ENCODE measurements at regions of chr17 and their contacts with region 1.

Region 1: DNA sequence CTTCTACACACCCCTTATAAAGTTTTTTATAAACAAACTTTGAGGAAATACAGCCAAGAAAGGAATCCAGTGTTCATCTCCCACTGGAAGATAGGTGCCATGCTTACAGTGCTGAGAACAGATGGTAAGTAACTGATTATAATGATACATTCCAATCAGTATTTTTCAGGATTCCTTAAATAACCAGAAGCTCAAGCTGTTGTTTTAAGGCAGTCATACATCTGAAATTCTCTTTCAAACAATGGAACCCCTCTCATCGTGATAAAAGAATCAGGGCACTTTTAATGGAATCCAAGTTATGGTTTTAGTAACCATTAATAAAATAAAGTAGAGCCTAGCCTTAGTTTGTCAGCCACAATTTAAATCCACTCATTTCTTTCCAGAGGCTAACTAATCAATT is 56.1 kb upstream of the STAC2 start:
- DNase-seq: no peak
- H3K4me3 ChIP-seq: no peak overlapping the region
- H3K4me3 Mint-ChIP-seq: no peak overlapping the region
- H3K27ac Mint-ChIP-seq: no peak overlapping the region
- H3K4me1 ChIP-seq: peaks cover 20% of the 10 kb centered on the region
- H3K4me1 Mint-ChIP-seq: peaks cover 12% of the 10 kb centered on the region
- H3K27me3 ChIP-seq: no peaks in the 10 kb centered on the region
- H3K27me3 Mint-ChIP-seq: no peaks in the 10 kb centered on the region
- CTCF ChIP-seq: no peak

Region 2: DNA sequence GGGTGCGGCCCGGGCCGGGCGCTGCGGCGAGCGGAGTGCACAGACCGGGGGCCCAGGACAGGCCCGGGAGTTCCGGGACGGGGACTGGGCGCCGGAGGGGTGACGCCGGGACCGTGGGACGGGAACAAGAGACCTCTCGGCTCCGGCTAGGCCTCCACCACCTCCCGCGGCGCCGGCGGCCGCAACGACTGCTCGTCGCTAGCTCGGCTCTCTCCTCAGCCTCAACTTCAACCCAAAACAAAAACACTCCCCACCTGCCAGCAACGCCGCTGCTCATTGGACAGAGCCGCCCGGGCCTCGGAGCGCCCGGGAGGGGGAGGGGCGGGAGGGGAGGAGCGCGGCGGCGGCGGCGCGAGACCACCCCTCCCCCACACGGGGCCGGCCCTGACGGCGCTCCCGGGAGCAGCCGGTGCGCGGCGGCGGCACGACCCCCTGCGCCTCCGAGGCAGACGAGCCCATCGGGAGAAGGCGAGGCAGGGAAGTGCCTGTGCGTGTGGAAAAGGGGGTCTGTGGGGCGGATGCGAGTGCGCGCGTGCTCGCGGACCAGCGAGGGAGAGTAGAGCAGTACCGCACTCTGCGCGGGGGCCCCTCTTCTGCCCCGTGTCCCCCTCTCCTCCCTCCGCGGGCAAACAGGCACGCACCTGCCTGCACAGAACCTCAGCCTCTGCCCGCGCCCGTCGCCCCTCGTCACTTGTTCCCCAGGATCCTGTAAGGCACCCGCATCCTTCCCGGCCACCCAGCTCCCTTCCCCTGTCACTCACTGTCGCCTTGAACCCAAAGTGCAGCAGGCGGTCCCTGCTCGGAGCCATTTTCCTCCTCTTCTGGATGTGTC is 119.8 kb after region 1 on chr17 and contains the start of gene FBXL20:
- CTCF ChIA-PET with region 1: no interaction called
- POLR2A ChIA-PET with region 1: no interaction called
- intact Hi-C with region 1: loop called (anchors 5 kb)
- DNase-seq: peak; percentile 93
- H3K4me3 ChIP-seq: peak within 1 kb of the TSS; percentile 100
- H3K4me3 Mint-ChIP-seq: peak within 1 kb of the TSS; percentile 99
- H3K27ac Mint-ChIP-seq: peak within 1 kb of the TSS; percentile 81
- H3K4me1 ChIP-seq: peaks cover 10% of the 10 kb centered on the region; the same call in 1 of the 2 replicates
- H3K4me1 Mint-ChIP-seq: peaks cover 12% of the 10 kb centered on the region
- H3K27me3 ChIP-seq: no peaks in the 10 kb centered on the region
- H3K27me3 Mint-ChIP-seq: no peaks in the 10 kb centered on the region
- CTCF ChIP-seq: no peak
- total RNA-seq, gene FBXL20: 11.2 and 12.6 TPM in 2 replicates